K562 (cell line): ENCODE measurements at regions of chr7 and their contacts with region 1.

Region 1: GRCh38 chr7:96321658-96322372 is at the start of gene SLC25A13:
- DNase-seq: peak; percentile 96 to 99 (median 99)
- ATAC-seq: peak; percentile 98
- H3K4me3 ChIP-seq: peak within 1 kb of the TSS; percentile 86
- H3K27ac ChIP-seq: peak within 1 kb of the TSS; percentile 92
- H3K4me1 ChIP-seq: peaks cover 10 to 17% of the 10 kb centered on the region in 2 experiments; a peak in 4 of 5 replicates
- H3K27me3 ChIP-seq: no peaks in the 10 kb centered on the region
- CTCF ChIP-seq: peak in 1 of 3 experiments; percentile 2; a peak in 1 of 6 replicates
- EP300 ChIP-seq: 0 out of 2 replicates have a peak, but pooled peaks have one; percentile 27
- POLR2A ChIP-seq: peak; percentile 86
- RAD21 ChIP-seq: 0 out of 4 replicates have a peak, but pooled peaks of 1 of the 2 experiments have one; percentile 3
- polyA plus RNA-seq, gene SLC25A13: 21.4 to 32.2 TPM

Region 2: GRCh38 chr7:96241855-96242254 is 80.0 kb before region 1 on chr7:
- CTCF ChIA-PET with region 1: no interaction called
- POLR2A ChIA-PET with region 1: no interaction called
- in situ Hi-C with region 1: no loop called
- intact Hi-C with region 1: loop called (anchors 2 kb)
- DNase-seq: peak in 2 of 4 experiments; percentile 55 to 71
- ATAC-seq: peak; percentile 52
- H3K4me3 ChIP-seq: no peak overlapping the region
- H3K27ac ChIP-seq: peak overlapping the region; percentile 62
- H3K4me1 ChIP-seq: peaks cover 19 to 52% of the 10 kb centered on the region in 2 experiments
- H3K27me3 ChIP-seq: no peaks in the 10 kb centered on the region
- CTCF ChIP-seq: no peak
- EP300 ChIP-seq: no peak
- POLR2A ChIP-seq: no peak
- RAD21 ChIP-seq: no peak